Panc1 (cell line): ENCODE measurements at regions of chr2 and their contacts with region 1.

Region 1: GRCh38 chr2:74587664-74588277 is 33.3 kb downstream of the DOK1 start:
- DNase-seq: peak; percentile 61
- ATAC-seq: peak; percentile 89
- H3K4me3 ChIP-seq: no peak overlapping the region
- H3K27ac ChIP-seq: no peak overlapping the region
- H3K4me1 ChIP-seq: no peaks in the 10 kb centered on the region
- H3K27me3 ChIP-seq: peaks cover 11% of the 10 kb centered on the region
- CTCF ChIP-seq: peak; percentile 87

Region 2: DNA sequence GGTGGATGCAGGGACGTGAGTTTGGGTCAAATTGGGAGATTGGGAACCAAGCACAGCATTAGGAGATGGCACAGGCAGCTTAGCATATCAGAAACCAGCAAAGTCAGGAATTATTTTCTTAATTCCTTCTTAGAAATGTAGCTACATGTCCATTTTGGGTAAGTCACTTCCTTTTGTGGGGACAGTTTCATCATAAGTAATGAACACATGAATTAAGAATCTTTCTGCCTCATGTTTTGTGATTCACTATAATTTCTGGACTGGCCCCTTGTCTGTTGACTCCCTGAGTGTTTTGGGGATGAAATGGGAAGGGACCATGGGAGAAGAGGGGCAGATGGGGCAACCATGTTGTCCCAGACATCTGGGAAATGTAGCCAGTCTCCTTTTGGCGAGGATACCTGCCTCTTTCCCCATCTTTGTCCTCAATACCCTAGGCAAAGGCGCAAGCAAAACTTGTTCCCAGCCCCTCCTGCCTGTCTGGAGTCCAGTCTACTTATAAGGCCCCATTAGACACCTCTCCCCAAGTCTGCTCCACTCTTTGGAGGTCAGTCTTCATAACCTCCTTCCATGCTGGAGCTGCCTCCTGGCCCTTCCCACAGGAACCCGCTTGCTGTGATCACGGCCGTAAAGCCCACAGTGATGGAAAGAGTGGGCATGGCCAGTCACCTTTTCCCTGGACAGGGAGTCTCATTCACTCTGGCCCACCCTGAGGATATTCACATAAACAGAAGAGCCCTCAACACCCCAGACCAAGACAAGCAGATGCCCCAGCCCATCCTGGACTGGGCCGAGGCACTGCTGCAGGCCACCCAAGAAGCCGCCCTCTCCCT is 363.6 kb before region 1 on chr2:
- CTCF ChIA-PET with region 1: no interaction called
- POLR2A ChIA-PET with region 1: no interaction called
- in situ Hi-C with region 1: no loop called
- intact Hi-C with region 1: no loop called
- DNase-seq: no peak
- ATAC-seq: peak; percentile 19
- H3K4me3 ChIP-seq: no peak overlapping the region
- H3K27ac ChIP-seq: no peak overlapping the region
- H3K4me1 ChIP-seq: peaks cover 9% of the 10 kb centered on the region; the same call in 1 of the 2 replicates
- H3K27me3 ChIP-seq: no peaks in the 10 kb centered on the region
- CTCF ChIP-seq: no peak

Region 3: DNA sequence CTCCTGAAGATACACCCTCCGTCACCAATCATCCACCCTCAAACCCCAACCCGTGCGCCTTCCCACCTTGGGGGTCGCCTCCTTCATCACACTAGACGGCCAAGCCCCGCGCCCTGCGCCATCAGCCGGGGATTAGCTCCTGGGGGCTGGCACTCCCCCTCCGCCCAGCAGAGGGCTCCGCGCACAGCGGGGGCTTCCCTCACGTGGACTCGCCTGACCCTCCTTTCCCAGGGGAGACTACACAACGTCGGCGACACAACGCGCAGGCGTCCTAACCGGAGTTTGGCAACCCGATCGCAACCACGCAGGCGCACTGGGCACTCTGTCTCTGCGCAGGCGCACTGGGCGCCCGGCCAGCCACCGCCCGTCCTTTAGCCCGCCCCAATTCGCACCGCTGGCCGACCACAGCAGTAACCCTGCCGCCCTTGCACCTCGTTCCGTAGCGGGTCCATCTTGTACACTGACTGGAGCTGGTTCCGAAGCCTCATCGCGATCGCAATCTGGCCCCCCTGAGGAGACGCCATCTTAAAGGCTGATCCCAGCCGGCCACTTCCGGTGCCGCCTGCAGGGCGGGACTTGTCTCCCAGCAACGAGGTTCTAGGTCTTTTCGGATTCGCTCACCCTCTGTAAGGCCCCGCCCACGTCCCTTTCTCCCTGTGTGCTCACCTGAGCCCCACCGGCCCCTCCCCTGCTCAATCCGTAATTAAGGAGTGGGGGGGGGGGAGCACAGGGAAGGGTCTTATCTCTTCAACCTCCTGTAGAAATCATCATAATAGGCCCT is 80.4 kb before region 1 on chr2 and contains the start of gene PCGF1:
- CTCF ChIA-PET with region 1: interaction called, 7 read pairs
- POLR2A ChIA-PET with region 1: no interaction called
- in situ Hi-C with region 1: no loop called
- intact Hi-C with region 1: loop called (anchors 10 kb)
- DNase-seq: peak; percentile 95
- ATAC-seq: peak; percentile 84
- H3K4me3 ChIP-seq: peak within 1 kb of the TSS; percentile 86 to 94
- H3K27ac ChIP-seq: peak within 1 kb of the TSS; percentile 98
- H3K4me1 ChIP-seq: peaks cover 25% of the 10 kb centered on the region
- H3K27me3 ChIP-seq: no peaks in the 10 kb centered on the region
- CTCF ChIP-seq: peak; percentile 80; the same call in 1 of the 2 replicates
- total RNA-seq, gene PCGF1: 36.8 TPM

Region 4: GRCh38 chr2:75076088-75076487 is 488.3 kb after region 1 on chr2:
- CTCF ChIA-PET with region 1: no interaction called
- POLR2A ChIA-PET with region 1: no interaction called
- in situ Hi-C with region 1: no loop called
- intact Hi-C with region 1: no loop called
- DNase-seq: no peak
- ATAC-seq: no peak
- H3K4me3 ChIP-seq: no peak overlapping the region
- H3K27ac ChIP-seq: no peak overlapping the region
- H3K4me1 ChIP-seq: no peaks in the 10 kb centered on the region
- H3K27me3 ChIP-seq: no peaks in the 10 kb centered on the region
- CTCF ChIP-seq: no peak